Panc1 (cell line): ENCODE measurements at regions of chr1 and their contacts with region 1.

Region 1: DNA sequence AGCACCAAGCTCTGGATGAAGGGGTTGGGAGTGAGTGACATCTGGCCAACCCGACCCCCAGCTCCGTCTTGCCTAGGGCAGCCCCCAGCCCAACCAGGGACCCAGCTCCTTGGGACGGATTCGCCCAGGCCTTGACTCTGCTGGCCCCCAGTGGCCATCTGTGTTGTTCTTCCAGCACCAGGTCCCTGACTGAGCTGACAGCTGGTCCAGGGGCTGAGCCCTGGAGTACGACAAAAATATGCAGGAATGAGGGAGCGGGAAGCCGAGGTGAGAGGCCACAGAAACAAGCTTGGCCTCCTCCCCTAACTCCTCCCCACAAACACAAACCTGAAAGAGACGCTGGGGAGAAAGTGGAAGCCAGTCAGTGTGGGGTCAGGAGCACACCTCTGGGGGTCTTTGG is 55.0 kb upstream of the PAX7 start:
- DNase-seq: no peak
- ATAC-seq: peak; percentile 67
- H3K4me3 ChIP-seq: no peak overlapping the region
- H3K27ac ChIP-seq: no peak overlapping the region
- H3K4me1 ChIP-seq: no peaks in the 10 kb centered on the region; the same call in 1 of the 2 replicates
- H3K27me3 ChIP-seq: no peaks in the 10 kb centered on the region; the same call in 1 of the 2 replicates
- CTCF ChIP-seq: peak; percentile 75

Region 2: GRCh38 chr1:17485280-17485679 is 1090.3 kb before region 1 on chr1:
- CTCF ChIA-PET with region 1: interaction called, 12 read pairs
- POLR2A ChIA-PET with region 1: no interaction called
- in situ Hi-C with region 1: no loop called
- intact Hi-C with region 1: no loop called
- DNase-seq: no peak
- ATAC-seq: peak; percentile 55; the same call in 1 of the 2 replicates
- H3K4me3 ChIP-seq: no peak overlapping the region
- H3K27ac ChIP-seq: no peak overlapping the region
- H3K4me1 ChIP-seq: no peaks in the 10 kb centered on the region
- H3K27me3 ChIP-seq: no peaks in the 10 kb centered on the region
- CTCF ChIP-seq: peak; percentile 77

Region 3: GRCh38 chr1:18299441-18300338 is 275.9 kb before region 1 on chr1:
- CTCF ChIA-PET with region 1: interaction called, 3 read pairs
- POLR2A ChIA-PET with region 1: no interaction called
- in situ Hi-C with region 1: no loop called
- intact Hi-C with region 1: loop called (anchors 10 kb)
- DNase-seq: peak; percentile 2
- ATAC-seq: peak; percentile 71
- H3K4me3 ChIP-seq: no peak overlapping the region
- H3K27ac ChIP-seq: no peak overlapping the region
- H3K4me1 ChIP-seq: no peaks in the 10 kb centered on the region
- H3K27me3 ChIP-seq: peaks cover 22% of the 10 kb centered on the region
- CTCF ChIP-seq: peak; percentile 91

Region 4: DNA sequence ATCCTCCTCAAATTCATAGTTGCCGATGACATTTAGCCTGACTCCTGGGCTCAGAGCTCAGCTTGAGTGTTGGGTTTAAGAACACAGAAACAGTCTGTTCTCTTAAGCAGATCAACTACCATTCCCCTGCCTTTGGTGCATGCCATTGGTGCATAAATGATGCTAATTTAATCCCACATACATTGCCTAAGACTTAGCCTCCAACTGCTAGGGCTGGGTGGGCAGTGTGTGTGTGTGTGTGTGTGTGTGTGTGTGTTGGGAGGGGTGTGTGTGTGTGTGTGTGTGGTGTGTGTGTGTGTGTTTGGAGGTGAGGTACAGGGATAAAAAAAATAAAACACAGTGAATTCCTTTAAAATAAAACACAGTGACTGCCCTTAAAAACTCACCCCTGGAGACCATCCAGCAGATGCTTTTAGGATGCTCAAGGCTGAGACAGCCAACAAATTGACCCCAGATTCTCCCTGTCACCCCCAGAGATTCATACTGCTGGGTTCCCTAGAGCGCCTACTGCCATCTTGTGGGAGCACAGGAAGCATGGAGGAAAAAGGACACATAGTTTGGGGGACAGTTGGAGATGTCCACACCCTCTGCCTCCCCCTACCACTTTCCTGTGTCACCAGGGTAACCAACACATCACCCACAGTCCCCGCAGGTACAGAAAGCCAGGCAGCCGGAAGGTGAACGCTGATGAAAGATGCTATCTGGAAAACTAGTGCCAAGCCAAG is 64.3 kb before region 1 on chr1:
- CTCF ChIA-PET with region 1: no interaction called
- POLR2A ChIA-PET with region 1: no interaction called
- in situ Hi-C with region 1: no loop called
- intact Hi-C with region 1: loop called (anchors 10 kb)
- DNase-seq: no peak
- ATAC-seq: no peak
- H3K4me3 ChIP-seq: no peak overlapping the region
- H3K27ac ChIP-seq: no peak overlapping the region
- H3K4me1 ChIP-seq: no peaks in the 10 kb centered on the region
- H3K27me3 ChIP-seq: peaks cover 9% of the 10 kb centered on the region; the same call in 1 of the 2 replicates
- CTCF ChIP-seq: peak; percentile 51; the same call in 1 of the 2 replicates

Region 5: GRCh38 chr1:18556364-18556763 is 19.3 kb before region 1 on chr1:
- CTCF ChIA-PET with region 1: interaction called, 11 read pairs
- POLR2A ChIA-PET with region 1: no interaction called
- in situ Hi-C with region 1: no loop called
- intact Hi-C with region 1: no loop called
- DNase-seq: no peak
- ATAC-seq: peak; percentile 77
- H3K4me3 ChIP-seq: no peak overlapping the region
- H3K27ac ChIP-seq: no peak overlapping the region
- H3K4me1 ChIP-seq: peaks cover 8% of the 10 kb centered on the region; the same call in 1 of the 2 replicates
- H3K27me3 ChIP-seq: peaks cover 23% of the 10 kb centered on the region
- CTCF ChIP-seq: peak; percentile 81

Region 6: GRCh38 chr1:18673975-18674374 is 98.4 kb after region 1 on chr1:
- CTCF ChIA-PET with region 1: no interaction called
- POLR2A ChIA-PET with region 1: no interaction called
- in situ Hi-C with region 1: no loop called
- intact Hi-C with region 1: no loop called
- DNase-seq: no peak
- ATAC-seq: no peak
- H3K4me3 ChIP-seq: no peak overlapping the region
- H3K27ac ChIP-seq: no peak overlapping the region
- H3K4me1 ChIP-seq: peaks cover 6% of the 10 kb centered on the region
- H3K27me3 ChIP-seq: peaks cover 4% of the 10 kb centered on the region
- CTCF ChIP-seq: no peak